ENCODE measurements at regions of chr2 and their contacts with region 1.

Region 1: DNA sequence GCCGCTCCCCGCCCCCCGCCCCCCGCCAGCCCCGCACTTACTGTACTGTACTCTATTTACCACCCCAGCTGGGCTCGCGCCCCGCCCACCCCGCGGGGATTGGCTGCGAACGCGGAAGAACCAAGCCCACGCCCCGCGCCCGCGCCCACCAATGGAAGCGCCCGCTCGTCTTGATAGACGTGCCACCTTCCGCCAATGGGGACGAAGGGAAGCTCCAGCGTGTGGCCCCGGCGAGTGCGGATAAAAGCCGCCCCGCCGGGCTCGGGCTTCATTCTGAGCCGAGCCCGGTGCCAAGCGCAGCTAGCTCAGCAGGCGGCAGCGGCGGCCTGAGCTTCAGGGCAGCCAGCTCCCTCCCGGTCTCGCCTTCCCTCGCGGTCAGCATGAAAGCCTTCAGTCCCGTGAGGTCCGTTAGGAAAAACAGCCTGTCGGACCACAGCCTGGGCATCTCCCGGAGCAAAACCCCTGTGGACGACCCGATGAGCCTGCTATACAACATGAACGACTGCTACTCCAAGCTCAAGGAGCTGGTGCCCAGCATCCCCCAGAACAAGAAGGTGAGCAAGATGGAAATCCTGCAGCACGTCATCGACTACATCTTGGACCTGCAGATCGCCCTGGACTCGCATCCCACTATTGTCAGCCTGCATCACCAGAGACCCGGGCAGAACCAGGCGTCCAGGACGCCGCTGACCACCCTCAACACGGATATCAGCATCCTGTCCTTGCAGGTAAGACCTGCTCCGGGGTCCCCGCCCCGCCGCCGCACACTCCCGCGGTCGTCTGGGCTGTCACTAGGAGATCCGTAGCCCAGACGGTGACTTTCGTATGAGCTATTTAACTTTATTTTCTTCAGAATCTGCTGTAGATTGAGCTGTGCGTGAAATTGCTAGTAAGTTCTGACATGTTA is at the start of gene ID2:
- DNase-seq: peak; percentile 99
- H3K4me3 Mint-ChIP-seq: peak within 1 kb of the TSS; percentile 99
- H3K27ac Mint-ChIP-seq: peak within 1 kb of the TSS; percentile 97
- H3K4me1 Mint-ChIP-seq: peaks cover 41% of the 10 kb centered on the region
- H3K27me3 Mint-ChIP-seq: peaks cover 14% of the 10 kb centered on the region
- total RNA-seq, gene ID2: 301 and 306 TPM in 2 replicates

Region 2: GRCh38 chr2:7427293-7428060 is 1254.6 kb before region 1 on chr2:
- intact Hi-C with region 1: loop called (anchors 1 kb)
- DNase-seq: peak; percentile 36
- H3K4me3 Mint-ChIP-seq: peak overlapping the region; percentile 2
- H3K27ac Mint-ChIP-seq: peak overlapping the region; percentile 69
- H3K4me1 Mint-ChIP-seq: peaks cover 48% of the 10 kb centered on the region
- H3K27me3 Mint-ChIP-seq: peaks cover 3% of the 10 kb centered on the region

Region 3: GRCh38 chr2:7725171-7725849 is 956.7 kb before region 1 on chr2:
- intact Hi-C with region 1: loop called (anchors 1 kb)
- DNase-seq: peak; percentile 64
- H3K4me3 Mint-ChIP-seq: peak overlapping the region; percentile 87
- H3K27ac Mint-ChIP-seq: peak overlapping the region; percentile 95
- H3K4me1 Mint-ChIP-seq: peaks cover 73% of the 10 kb centered on the region
- H3K27me3 Mint-ChIP-seq: no peaks in the 10 kb centered on the region

Region 4: DNA sequence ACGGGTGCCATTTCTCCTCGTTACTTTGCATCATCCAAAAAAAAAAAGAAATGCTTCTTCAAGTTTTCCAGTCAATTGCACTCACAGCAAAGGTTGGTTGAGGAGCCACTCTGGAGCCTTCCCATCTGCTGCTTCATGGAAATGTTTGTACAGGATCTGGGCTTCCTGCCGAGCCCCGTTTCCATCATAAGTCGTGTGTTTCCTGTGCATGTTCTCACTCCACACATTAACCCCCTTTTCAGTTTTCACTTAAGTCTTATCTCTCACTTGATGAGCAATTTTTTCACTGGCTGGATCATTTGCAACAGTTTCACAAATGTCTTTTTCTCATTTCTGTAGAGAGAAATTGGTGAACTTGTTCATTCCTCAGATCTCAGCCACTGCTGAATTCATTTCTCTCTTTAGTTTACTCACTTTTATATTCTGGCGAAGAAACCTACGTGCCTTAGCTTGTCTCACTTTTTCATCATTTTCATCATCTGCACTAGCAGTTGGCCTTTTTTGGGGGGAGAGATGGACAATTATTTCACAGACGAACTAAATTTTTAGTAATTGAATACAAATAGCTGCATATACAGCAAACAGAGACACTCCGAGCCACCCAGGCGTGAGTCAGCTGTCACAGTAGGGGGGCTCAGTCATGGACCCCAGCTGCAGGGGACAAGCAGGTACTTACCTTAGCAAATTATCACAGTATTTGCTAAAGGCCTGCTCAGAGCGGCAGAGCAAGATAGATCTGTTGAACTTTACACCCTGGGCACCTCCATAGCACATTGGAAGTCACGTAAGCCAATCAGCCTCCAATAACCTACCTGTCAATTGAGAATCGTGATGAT is 751.0 kb before region 1 on chr2:
- intact Hi-C with region 1: loop called (anchors 2 kb)
- DNase-seq: no peak
- H3K4me3 Mint-ChIP-seq: no peak overlapping the region
- H3K27ac Mint-ChIP-seq: peak overlapping the region; percentile 81
- H3K4me1 Mint-ChIP-seq: peaks cover 11% of the 10 kb centered on the region
- H3K27me3 Mint-ChIP-seq: no peaks in the 10 kb centered on the region

Region 5: DNA sequence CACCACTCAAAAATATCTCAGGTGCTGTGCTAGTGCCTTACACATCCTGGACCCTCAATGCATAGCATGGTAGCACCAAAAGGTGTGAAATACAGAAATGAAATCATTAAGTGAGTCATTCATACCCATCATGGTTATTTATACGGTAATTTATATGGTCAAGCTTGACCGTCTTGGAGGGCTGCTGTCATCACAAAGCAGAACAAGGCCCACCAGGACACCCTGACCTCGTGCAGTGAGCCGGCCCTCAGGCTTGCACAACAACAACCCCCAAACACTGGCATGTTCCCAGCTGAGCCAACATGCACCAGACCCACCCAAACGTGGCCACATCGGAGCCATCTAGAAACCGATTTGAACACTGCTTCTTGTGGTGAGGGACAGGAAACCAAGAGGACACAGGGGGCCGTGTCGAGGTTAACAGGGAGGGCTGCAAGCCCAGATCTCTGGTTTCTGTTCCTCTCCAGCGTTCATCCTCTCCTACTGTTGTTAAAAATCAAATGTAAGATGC is 378.7 kb before region 1 on chr2:
- intact Hi-C with region 1: loop called (anchors 1 kb)
- DNase-seq: peak; percentile 77
- H3K4me3 Mint-ChIP-seq: peak overlapping the region; percentile 65
- H3K27ac Mint-ChIP-seq: peak overlapping the region; percentile 85
- H3K4me1 Mint-ChIP-seq: peaks cover 91% of the 10 kb centered on the region
- H3K27me3 Mint-ChIP-seq: peaks cover 7% of the 10 kb centered on the region

Region 6: DNA sequence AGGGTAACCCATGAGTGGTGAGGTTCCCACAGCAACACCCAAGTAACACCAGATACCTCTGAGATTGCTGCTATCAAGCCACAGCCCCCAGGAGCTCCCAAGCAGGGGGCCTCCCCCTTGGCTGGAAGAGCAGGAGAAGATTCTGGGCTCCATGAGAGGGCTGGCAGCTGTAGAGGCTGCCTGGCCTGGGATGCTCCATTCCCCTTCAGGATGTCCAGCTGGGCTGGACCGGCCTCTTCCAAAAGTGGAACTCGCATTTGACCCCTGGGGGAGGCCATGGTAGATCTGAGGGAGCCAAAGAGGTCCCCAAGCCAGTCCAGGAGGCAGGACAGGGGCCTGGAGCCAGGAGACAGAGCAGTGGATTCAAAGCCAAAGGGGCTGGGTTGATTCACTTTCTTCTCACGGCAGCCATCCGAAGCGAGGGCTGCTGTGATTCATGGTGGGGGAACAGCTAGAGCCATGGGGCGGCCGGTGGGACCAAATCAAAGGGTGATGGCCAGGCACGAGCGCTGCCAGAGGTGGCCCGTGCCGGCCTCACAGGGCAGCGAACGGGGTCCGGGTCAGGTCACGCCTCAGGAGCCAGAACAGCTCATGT is 95.5 kb before region 1 on chr2:
- intact Hi-C with region 1: loop called (anchors 1 kb)
- DNase-seq: no peak
- H3K4me3 Mint-ChIP-seq: peak overlapping the region; percentile 5
- H3K27ac Mint-ChIP-seq: no peak overlapping the region
- H3K4me1 Mint-ChIP-seq: peaks cover 48% of the 10 kb centered on the region
- H3K27me3 Mint-ChIP-seq: peaks cover 5% of the 10 kb centered on the region

Measured in activated T-helper 1 cell treated with anti-CD3 and anti-CD28 coated beads, Interleukin-12 subunit alpha, Interleukin-12 subunit beta, Interleukin-2, Interleukin-4 antibody, amounts not matched to agents 30 ng/mL and 10 ng/mL and 1 ng/mL, durations not matched to agents 14 hours and 24 hours and 36 hours (primary cell).